Mammary epithelial cell (primary cell): ENCODE measurements at regions of chr3 and their contacts with region 1.

Region 1: GRCh38 chr3:11568503-11569155 is 75.1 kb downstream of the VGLL4 start:
- DNase-seq: peak; percentile 92
- H3K4me3 ChIP-seq: peak overlapping the region in 2 of 3 experiments; percentile 24 to 33
- H3K27ac ChIP-seq: peak overlapping the region; percentile 96
- H3K4me1 ChIP-seq: peaks cover 59% of the 10 kb centered on the region
- H3K27me3 ChIP-seq: no peaks in the 10 kb centered on the region
- CTCF ChIP-seq: no peak

Region 2: DNA sequence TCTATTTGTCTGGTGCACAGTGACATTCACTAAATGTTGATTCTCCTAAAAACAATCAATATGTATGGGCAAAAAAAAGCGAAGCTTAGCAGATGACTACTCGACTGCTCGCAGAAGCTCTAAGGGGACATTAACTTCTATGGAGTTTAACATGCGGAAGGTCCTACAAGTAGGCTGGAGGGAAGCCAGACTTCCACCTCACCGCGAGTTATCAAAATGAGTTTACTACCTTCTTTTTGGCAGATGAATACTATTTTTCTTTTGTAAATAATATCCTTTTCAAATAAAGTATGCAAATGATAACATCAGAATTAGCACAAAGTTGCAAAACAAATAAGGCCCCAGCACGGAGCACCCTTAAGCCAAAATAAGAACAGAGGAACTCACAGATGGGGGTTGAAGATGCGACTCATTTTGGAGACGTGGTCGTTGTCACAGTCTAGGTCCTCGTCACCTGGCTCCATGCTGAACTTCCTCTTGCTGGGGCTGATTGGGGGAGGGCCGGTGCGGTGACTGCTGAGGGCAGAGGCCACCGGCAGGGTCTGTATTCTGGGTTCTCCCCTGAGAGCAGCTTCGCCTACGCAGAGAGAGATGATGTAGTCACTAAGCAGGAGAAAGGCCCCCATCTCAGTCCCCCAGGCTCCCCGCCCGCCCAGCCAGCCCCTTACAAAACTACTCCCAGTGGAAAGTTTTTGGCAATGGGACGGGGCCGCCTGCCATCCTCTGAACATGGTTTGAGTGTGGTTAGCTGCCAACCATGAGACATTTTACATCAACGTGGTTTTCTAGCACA is 33.0 kb after region 1 on chr3:
- CTCF ChIA-PET with region 1: no interaction called
- dilution Hi-C with region 1: no loop called
- in situ Hi-C with region 1: no loop called
- intact Hi-C with region 1: loop called (anchors 1 kb)
- DNase-seq: no peak
- H3K4me3 ChIP-seq: no peak overlapping the region
- H3K27ac ChIP-seq: no peak overlapping the region
- H3K4me1 ChIP-seq: peaks cover 31% of the 10 kb centered on the region
- H3K27me3 ChIP-seq: no peaks in the 10 kb centered on the region
- CTCF ChIP-seq: no peak

Region 3: GRCh38 chr3:11619946-11620657 is 51.5 kb after region 1 on chr3:
- CTCF ChIA-PET with region 1: no interaction called
- dilution Hi-C with region 1: loop called (anchors 5 kb)
- in situ Hi-C with region 1: no loop called
- intact Hi-C with region 1: no loop called
- DNase-seq: no peak
- H3K4me3 ChIP-seq: no peak overlapping the region
- H3K27ac ChIP-seq: no peak overlapping the region
- H3K4me1 ChIP-seq: no peaks in the 10 kb centered on the region
- H3K27me3 ChIP-seq: no peaks in the 10 kb centered on the region
- CTCF ChIP-seq: no peak

Region 4: DNA sequence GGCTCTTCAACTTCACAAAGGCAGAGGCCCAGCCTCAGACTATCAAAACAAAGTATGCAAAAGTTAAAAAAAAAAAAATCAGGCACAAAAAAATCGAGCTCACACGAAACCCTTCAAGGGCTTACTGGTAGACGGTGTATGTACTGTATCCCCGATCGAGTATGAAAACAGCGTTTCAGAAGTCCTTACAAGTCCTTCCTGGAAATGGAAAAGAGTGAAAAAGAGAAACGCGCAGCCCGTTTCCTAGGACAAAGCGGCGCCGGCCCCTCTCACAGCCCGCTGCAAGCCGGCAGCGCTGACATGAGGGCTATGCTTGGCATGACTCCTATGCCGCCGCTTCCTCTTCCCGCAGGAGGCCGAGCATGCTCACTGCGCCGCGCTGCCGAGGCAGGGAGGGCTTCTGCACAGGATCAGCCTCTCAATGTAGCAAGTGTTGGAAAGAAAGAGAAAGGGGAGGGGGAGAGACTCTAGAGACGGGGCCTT is 75.0 kb after region 1 on chr3 and contains the start of gene VGLL4:
- CTCF ChIA-PET with region 1: no interaction called
- dilution Hi-C with region 1: loop called (anchors 5 kb)
- in situ Hi-C with region 1: no loop called
- intact Hi-C with region 1: loop called (anchors 1 kb)
- DNase-seq: peak; percentile 77
- H3K4me3 ChIP-seq: peak within 1 kb of the TSS; percentile 57 to 65 (median 61)
- H3K27ac ChIP-seq: peak within 1 kb of the TSS; percentile 93
- H3K4me1 ChIP-seq: peaks cover 31% of the 10 kb centered on the region
- H3K27me3 ChIP-seq: no peaks in the 10 kb centered on the region
- CTCF ChIP-seq: peak; percentile 6 to 31
- total RNA-seq, gene VGLL4: 30.8 to 77.3 TPM

Region 5: DNA sequence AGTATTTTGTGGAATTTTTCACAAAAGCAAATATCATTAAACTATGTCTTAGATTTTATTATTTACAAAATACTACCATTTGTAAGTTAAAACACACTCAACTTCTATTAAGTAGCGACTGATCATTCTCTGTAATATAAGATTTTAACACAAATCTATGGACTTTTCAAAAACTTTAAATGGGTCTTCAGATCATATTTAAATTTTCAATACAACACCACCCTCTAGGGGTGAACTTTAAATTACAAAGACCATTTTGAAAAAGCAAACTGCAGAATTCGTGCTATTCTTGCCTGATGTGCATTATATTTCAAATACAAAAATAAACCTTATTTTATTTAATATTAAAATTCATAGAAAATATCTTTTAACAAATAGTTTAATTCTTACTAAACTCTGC is 83.3 kb after region 1 on chr3:
- CTCF ChIA-PET with region 1: no interaction called
- dilution Hi-C with region 1: loop called (anchors 5 kb)
- in situ Hi-C with region 1: no loop called
- intact Hi-C with region 1: no loop called
- DNase-seq: no peak
- H3K4me3 ChIP-seq: no peak overlapping the region
- H3K27ac ChIP-seq: no peak overlapping the region
- H3K4me1 ChIP-seq: no peaks in the 10 kb centered on the region
- H3K27me3 ChIP-seq: no peaks in the 10 kb centered on the region
- CTCF ChIP-seq: peak; percentile 26 to 29

Region 6: GRCh38 chr3:11680509-11680908 is 111.9 kb after region 1 on chr3:
- CTCF ChIA-PET with region 1: no interaction called
- dilution Hi-C with region 1: no loop called
- in situ Hi-C with region 1: no loop called
- intact Hi-C with region 1: no loop called
- DNase-seq: no peak
- H3K4me3 ChIP-seq: no peak overlapping the region
- H3K27ac ChIP-seq: no peak overlapping the region
- H3K4me1 ChIP-seq: no peaks in the 10 kb centered on the region
- H3K27me3 ChIP-seq: no peaks in the 10 kb centered on the region
- CTCF ChIP-seq: no peak

Region 7: DNA sequence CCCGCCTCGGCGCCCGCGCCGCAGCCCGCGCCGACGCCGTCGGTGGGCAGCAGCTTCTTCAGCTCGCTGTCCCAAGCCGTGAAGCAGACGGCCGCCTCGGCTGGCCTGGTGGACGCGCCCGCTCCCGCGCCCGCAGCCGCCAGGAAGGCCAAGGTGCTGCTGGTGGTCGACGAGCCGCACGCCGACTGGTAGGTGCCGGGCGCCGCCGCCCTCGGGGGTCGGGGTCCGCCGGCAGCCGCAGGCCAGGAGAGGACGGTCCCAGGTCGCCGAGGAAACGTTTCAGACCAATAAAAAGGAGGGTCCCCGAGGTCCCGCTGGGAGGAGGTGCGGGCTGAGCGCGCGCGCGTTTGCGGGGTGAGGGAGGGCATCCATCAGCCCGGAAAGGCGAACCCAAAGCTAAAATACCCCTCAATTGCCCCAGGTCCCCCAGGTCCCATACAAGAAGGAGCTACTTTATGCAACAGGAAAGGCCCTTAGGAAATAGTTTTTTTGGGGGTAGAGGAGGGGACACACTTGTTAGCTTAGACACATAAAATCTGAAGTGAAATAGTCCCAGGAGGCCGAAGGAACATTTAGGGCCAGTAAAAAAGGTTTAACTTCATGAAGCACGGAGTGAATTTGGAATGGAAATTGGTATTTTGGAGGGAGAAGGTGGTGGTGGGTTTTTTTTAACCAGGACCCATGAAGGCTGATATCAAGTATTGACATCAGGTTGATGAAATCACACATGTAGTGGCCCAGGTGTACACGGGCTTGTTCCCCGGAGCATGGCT is 436.3 kb after region 1 on chr3:
- CTCF ChIA-PET with region 1: no interaction called
- dilution Hi-C with region 1: no loop called
- in situ Hi-C with region 1: no loop called
- intact Hi-C with region 1: no loop called
- DNase-seq: no peak
- H3K4me3 ChIP-seq: no peak overlapping the region
- H3K27ac ChIP-seq: no peak overlapping the region
- H3K4me1 ChIP-seq: no peaks in the 10 kb centered on the region
- H3K27me3 ChIP-seq: peaks cover 23% of the 10 kb centered on the region
- CTCF ChIP-seq: no peak